Mammary epithelial cell (primary cell): ENCODE measurements at regions of chr12 and their contacts with region 1.

Region 1: GRCh38 chr12:104339663-104340062 is 36.1 kb downstream of the EID3 start:
- DNase-seq: no peak
- H3K4me3 ChIP-seq: no peak overlapping the region
- H3K27ac ChIP-seq: no peak overlapping the region
- H3K4me1 ChIP-seq: no peaks in the 10 kb centered on the region
- H3K27me3 ChIP-seq: no peaks in the 10 kb centered on the region
- CTCF ChIP-seq: no peak

Region 2: DNA sequence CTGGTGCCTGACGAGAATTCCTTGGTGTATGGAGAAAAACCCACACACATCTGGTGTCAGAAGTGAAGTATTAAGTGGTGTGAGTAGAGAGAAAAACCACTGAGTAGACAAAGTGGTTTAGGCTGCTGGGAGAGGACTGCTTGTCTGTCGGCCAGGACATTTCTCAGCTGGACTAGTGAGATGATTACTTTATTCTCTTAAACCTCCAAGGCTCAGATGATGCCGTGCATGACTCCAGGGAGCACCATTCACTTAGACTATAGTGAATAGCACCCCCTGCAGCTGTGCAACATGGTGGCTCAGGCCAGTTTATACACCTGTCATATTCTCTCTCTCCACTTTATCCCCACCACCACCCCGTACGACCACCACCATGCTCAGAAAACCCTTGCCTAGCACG is 173.2 kb before region 1 on chr12:
- CTCF ChIA-PET with region 1: no interaction called
- dilution Hi-C with region 1: no loop called
- in situ Hi-C with region 1: no loop called
- intact Hi-C with region 1: no loop called
- DNase-seq: no peak
- H3K4me3 ChIP-seq: no peak overlapping the region
- H3K27ac ChIP-seq: no peak overlapping the region
- H3K4me1 ChIP-seq: no peaks in the 10 kb centered on the region
- H3K27me3 ChIP-seq: no peaks in the 10 kb centered on the region
- CTCF ChIP-seq: no peak

Region 3: GRCh38 chr12:104582739-104583138 is 243.1 kb after region 1 on chr12:
- CTCF ChIA-PET with region 1: no interaction called
- dilution Hi-C with region 1: no loop called
- in situ Hi-C with region 1: no loop called
- intact Hi-C with region 1: no loop called
- DNase-seq: no peak
- H3K4me3 ChIP-seq: no peak overlapping the region
- H3K27ac ChIP-seq: no peak overlapping the region
- H3K4me1 ChIP-seq: peaks cover 20% of the 10 kb centered on the region
- H3K27me3 ChIP-seq: no peaks in the 10 kb centered on the region
- CTCF ChIP-seq: no peak

Region 4: DNA sequence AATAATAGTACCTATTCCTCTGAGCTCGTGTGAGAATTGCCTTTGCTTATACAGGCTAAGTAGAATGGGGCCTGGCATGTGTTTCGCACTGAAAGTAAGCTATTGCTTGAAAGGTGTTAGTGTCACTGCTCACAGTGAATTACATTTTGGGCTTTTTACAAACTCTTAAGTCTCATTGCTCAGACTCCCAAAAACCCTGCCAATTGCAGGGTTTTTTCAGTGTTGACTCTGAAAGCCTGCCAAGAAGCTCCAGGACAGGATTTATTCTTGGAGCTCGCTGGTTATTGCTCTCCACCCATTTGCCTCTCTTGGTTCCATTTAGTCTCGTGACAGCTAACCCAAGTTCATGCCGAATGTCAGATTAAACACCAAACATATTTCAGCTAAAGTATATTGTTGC is 686.2 kb after region 1 on chr12:
- CTCF ChIA-PET with region 1: no interaction called
- dilution Hi-C with region 1: no loop called
- in situ Hi-C with region 1: loop called in 1 of 2 experiments (anchors 25 kb)
- intact Hi-C with region 1: no loop called
- DNase-seq: no peak
- H3K4me3 ChIP-seq: no peak overlapping the region
- H3K27ac ChIP-seq: no peak overlapping the region
- H3K4me1 ChIP-seq: no peaks in the 10 kb centered on the region
- H3K27me3 ChIP-seq: no peaks in the 10 kb centered on the region
- CTCF ChIP-seq: no peak

Region 5: GRCh38 chr12:105041186-105041585 is 701.5 kb after region 1 on chr12:
- CTCF ChIA-PET with region 1: no interaction called
- dilution Hi-C with region 1: no loop called
- in situ Hi-C with region 1: loop called in 1 of 2 experiments (anchors 25 kb)
- intact Hi-C with region 1: loop called (anchors 10 kb)
- DNase-seq: no peak
- H3K4me3 ChIP-seq: no peak overlapping the region
- H3K27ac ChIP-seq: no peak overlapping the region
- H3K4me1 ChIP-seq: peaks cover 9% of the 10 kb centered on the region
- H3K27me3 ChIP-seq: no peaks in the 10 kb centered on the region
- CTCF ChIP-seq: no peak

Region 6: DNA sequence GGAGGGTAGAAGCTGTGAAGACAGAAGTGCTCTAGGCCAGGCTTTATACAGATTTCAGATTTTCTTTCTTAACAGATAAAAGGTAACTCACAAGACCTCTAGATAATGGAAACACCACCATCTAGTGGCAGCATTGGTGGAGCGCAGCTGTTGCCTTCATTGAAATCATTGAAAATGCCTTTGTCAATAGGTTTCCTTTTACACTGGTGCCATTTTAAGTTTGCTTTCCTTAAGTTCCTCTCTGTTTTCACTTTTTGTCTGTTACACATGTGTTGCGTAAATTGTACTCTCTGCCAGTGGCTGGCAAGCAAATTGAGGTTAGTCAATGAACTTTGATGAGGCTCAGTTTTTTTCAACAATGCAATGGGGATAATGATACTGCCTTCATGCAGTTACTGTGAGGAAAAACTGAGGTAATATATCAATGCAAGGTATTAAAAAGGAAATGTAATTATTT is 713.5 kb after region 1 on chr12:
- CTCF ChIA-PET with region 1: no interaction called
- dilution Hi-C with region 1: no loop called
- in situ Hi-C with region 1: loop called (anchors 25 kb)
- intact Hi-C with region 1: loop called (anchors 10 kb)
- DNase-seq: peak; percentile 61
- H3K4me3 ChIP-seq: no peak overlapping the region
- H3K27ac ChIP-seq: no peak overlapping the region
- H3K4me1 ChIP-seq: no peaks in the 10 kb centered on the region
- H3K27me3 ChIP-seq: no peaks in the 10 kb centered on the region
- CTCF ChIP-seq: peak; percentile 88 to 97